Ascending aorta (tissue), 2 donors: ENCODE measurements at regions of chr10 and their contacts with region 1.

Region 1: GRCh38 chr10:125060826-125061556 is 99.4 kb downstream of the CTBP2 start:
- DNase-seq: peak; percentile 67 to 96
- H3K4me3 ChIP-seq: peak overlapping the region in 1 of 2 donors; percentile 47
- H3K27ac ChIP-seq: peak overlapping the region; percentile 99
- H3K4me1 ChIP-seq: peaks cover 59 to 90% of the 10 kb centered on the region in 2 donors
- H3K27me3 ChIP-seq: no peaks in the 10 kb centered on the region
- CTCF ChIP-seq: peak; percentile 81 to 91 (median 85)

Region 2: GRCh38 chr10:124791378-124792348 is 269.3 kb before region 1 on chr10 and contains the start of gene EEF1AKMT2:
- intact Hi-C with region 1: loop called (anchors 10 kb)
- DNase-seq: peak; percentile 20 to 88
- H3K4me3 ChIP-seq: peak within 1 kb of the TSS; percentile 81 to 94
- H3K27ac ChIP-seq: peak within 1 kb of the TSS; percentile 75 to 93
- H3K4me1 ChIP-seq: peaks cover 3 to 6% of the 10 kb centered on the region in 2 donors
- H3K27me3 ChIP-seq: no peaks in the 10 kb centered on the region
- CTCF ChIP-seq: peak; percentile 28 to 66 (median 54)
- total RNA-seq, gene EEF1AKMT2: 10.5 TPM

Region 3: GRCh38 chr10:124992462-124993344 is 68.3 kb before region 1 on chr10:
- intact Hi-C with region 1: loop called (anchors 1 kb)
- DNase-seq: peak in 1 of 2 donors; percentile 87
- H3K4me3 ChIP-seq: no peak overlapping the region
- H3K27ac ChIP-seq: peak overlapping the region; percentile 2 to 35
- H3K4me1 ChIP-seq: peaks cover under 1 to 22% of the 10 kb centered on the region in 2 donors
- H3K27me3 ChIP-seq: no peaks in the 10 kb centered on the region
- CTCF ChIP-seq: peak; percentile 79 to 85 (median 80)

Region 4: DNA sequence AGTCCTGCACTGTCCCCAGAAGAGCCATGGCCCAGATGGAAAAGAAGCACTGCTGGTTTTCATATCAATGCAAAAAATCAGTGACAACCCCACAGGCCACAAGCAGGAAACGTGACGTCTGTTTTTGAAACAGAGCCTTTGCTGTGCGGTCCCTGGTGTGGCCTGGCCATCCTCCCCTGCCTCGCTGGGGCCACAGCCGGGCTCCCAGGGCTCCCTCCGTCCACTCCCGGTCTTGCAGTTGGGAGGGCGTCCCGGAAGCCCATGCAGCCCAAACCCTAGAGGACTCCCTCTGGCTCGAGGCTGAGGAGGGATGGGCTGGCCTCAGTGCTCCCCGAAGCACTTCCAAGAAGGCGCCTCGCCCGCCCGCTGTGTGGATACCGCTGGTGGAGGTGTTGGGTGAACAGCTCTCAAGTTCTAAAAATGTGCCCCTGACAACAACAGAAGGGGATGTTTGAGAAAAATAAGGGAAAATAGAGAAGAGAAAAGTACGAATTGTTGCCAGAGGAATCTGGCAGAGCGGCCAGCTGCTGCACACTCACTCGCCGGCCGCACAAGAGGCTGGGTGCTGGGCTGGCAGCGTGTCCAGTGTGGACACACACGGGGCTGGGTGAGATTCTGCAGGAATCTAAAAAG is 45.6 kb before region 1 on chr10:
- intact Hi-C with region 1: loop called (anchors 2 kb)
- DNase-seq: peak in 1 of 2 donors; percentile 84
- H3K4me3 ChIP-seq: peak overlapping the region in 1 of 2 donors; percentile 44
- H3K27ac ChIP-seq: peak overlapping the region; percentile 90 to 94
- H3K4me1 ChIP-seq: peaks cover 42 to 90% of the 10 kb centered on the region in 2 donors
- H3K27me3 ChIP-seq: no peaks in the 10 kb centered on the region
- CTCF ChIP-seq: no peak

Region 5: DNA sequence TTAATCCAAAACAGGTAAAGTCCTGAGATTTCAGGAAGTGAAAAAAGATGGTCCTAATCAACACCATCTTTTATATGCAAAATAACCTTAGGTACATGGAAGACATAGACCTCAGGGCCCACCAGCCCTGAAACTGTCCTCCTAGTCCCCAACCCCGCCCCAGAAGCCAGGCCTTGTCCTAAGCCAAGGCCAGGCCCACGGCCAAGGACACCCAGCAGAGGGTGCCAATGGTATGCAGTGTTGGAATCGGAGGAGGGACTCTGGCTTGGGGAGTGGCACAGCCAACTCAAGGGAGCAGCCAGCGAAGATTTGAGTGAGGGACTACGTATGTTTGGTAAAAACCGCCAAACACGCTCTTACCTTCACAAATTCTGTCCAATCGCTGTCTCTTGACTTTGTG is 22.4 kb before region 1 on chr10:
- intact Hi-C with region 1: no loop called
- DNase-seq: peak in 1 of 2 donors; percentile 81
- H3K4me3 ChIP-seq: peak overlapping the region; percentile 12 to 35
- H3K27ac ChIP-seq: peak overlapping the region; percentile 2 to 39
- H3K4me1 ChIP-seq: peaks cover 11 to 67% of the 10 kb centered on the region in 2 donors
- H3K27me3 ChIP-seq: no peaks in the 10 kb centered on the region
- CTCF ChIP-seq: peak in 1 of 3 experiments; percentile 37

Region 6: GRCh38 chr10:125084191-125084613 is 23.2 kb after region 1 on chr10:
- intact Hi-C with region 1: loop called (anchors 1 kb)
- DNase-seq: peak; percentile 56 to 91
- H3K4me3 ChIP-seq: peak overlapping the region in 1 of 2 donors; percentile 46
- H3K27ac ChIP-seq: peak overlapping the region; percentile 90 to 93
- H3K4me1 ChIP-seq: peaks cover 10 to 38% of the 10 kb centered on the region in 2 donors
- H3K27me3 ChIP-seq: no peaks in the 10 kb centered on the region
- CTCF ChIP-seq: peak in 2 of 3 experiments; percentile 10 to 24

Region 7: GRCh38 chr10:125160856-125161706 is 100.1 kb after region 1 on chr10:
- intact Hi-C with region 1: loop called (anchors 2 kb)
- DNase-seq: peak; percentile 56 to 90
- H3K4me3 ChIP-seq: peak overlapping the region; percentile 92 to 96
- H3K27ac ChIP-seq: peak overlapping the region; percentile 94 to 99
- H3K4me1 ChIP-seq: peaks cover 0 to 14% of the 10 kb centered on the region in 2 donors
- H3K27me3 ChIP-seq: no peaks in the 10 kb centered on the region
- CTCF ChIP-seq: peak; percentile 37 to 56 (median 41)